ENCODE measurements at regions of chr11 and their contacts with region 1.

Region 1: DNA sequence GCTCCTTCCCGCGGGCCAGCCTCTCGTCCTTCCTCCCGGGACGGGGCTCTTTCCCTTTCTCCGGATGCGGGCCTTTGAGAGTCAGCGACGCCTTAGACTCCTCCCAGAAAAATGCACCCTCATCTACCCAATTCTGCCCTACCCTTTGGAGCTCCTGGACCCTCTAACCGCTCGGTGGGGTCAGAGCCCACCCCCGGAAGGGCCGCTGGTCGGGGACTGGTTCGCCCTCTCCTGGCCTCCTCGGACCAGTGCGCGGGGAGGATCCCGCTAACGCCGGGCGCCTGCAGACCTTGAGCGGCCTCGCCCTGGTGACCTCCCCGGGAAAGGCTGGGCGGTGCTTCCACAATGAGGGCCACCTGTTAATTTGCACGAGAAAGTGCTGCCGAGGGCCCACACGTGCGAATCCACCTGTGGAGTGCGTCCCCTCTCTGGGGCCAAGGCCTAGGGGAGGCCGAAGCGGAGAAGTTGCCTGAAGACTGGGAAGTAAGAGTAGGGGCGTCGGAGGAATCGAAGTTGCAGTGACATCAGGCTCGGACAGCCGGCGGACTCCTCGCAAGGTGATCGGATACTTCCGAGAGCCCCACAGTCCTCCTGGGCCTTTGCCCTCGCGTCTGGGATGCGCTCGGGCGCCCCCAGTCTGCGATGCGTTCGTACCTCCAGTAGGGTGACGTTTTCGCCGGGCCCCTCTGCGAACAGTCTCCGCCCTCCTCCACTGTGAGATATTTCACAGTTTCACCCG is 61.5 kb downstream of the ENDOD1 start:
- DNase-seq: peak; percentile 96
- H3K4me3 ChIP-seq: peak overlapping the region; percentile 66 to 75
- H3K27ac ChIP-seq: peak overlapping the region; percentile 90 to 97
- H3K4me1 ChIP-seq: peaks cover 31% of the 10 kb centered on the region
- H3K27me3 ChIP-seq: no peaks in the 10 kb centered on the region
- CTCF ChIP-seq: peak; percentile 69 to 98 (median 92)
- POLR2A ChIP-seq: no peak

Region 2: DNA sequence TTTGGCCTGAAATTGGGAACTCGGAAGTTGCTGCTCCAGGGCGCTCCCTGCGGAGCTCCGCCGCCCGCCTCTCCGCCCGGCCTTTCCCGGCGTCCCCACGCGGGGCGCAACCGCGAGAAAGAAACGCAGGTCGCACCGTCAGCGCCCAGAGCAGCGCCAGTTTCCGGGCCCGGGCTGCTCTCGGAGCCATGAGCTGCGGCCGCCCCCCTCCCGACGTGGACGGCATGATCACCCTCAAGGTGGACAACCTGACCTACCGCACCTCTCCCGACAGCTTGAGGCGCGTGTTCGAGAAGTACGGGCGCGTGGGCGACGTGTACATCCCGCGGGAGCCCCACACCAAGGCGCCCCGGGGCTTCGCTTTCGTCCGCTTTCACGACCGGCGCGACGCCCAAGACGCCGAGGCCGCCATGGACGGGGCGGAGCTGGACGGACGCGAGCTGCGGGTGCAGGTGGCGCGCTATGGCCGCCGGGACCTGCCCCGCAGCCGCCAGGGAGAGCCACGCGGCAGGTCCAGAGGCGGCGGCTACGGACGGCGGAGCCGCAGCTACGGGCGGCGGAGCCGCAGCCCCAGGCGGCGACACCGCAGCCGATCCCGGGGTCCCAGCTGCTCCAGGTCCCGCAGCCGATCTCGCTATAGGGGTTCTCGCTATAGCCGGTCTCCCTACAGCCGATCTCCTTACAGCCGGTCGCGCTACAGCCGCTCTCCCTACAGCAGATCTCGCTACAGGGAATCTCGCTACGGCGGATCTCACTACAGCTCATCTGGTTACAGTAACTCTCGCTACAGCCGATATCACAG is 83.9 kb before region 1 on chr11:
- intact Hi-C with region 1: loop called (anchors 5 kb)
- DNase-seq: peak; percentile 85
- H3K4me3 ChIP-seq: peak overlapping the region; percentile 80 to 84
- H3K27ac ChIP-seq: peak overlapping the region; percentile 97
- H3K4me1 ChIP-seq: peaks cover 7% of the 10 kb centered on the region
- H3K27me3 ChIP-seq: no peaks in the 10 kb centered on the region
- CTCF ChIP-seq: peak; percentile 32 to 49 (median 46)
- POLR2A ChIP-seq: no peak

Region 3: DNA sequence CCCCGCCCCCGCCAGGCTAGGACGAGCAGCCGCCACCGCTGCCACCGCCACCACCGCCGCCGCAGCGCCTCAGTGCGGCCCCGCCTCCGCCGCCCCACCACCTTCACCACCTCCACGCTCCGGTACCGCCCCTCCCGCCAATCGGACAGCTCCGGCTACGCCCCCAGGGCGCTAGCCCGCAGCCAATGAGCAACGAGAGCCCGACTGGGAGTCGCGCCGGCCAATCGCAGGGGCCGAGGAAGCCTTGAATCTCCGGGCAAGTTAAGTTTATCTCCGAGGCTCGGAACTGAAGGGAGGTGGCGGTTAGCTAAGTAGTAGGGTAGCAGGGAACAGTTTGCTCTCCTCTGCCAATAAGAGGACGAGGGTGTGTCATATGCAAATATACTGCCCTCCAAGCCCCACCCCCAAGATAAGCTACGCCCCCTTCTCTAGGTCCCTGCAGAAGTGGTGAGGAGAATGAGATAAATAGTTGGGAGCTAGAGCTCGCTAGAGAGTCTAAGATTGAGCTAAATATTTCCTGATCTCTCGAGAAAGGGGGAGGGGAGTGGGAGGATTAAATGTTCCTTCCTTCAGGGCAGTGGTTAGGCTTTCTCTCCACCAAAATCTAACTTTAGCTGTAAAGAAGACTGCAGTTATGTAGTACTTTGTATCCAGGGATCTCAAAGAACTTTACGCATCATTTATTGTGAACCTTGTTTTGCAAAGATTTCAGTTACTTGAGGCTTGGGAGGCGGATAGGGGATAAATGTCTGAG is 80.2 kb after region 1 on chr11 and contains the start of gene SESN3:
- intact Hi-C with region 1: loop called (anchors 5 kb)
- DNase-seq: peak; percentile 99
- H3K4me3 ChIP-seq: peak within 1 kb of the TSS; percentile 94 to 95
- H3K27ac ChIP-seq: peak within 1 kb of the TSS; percentile 89 to 97
- H3K4me1 ChIP-seq: no peaks in the 10 kb centered on the region
- H3K27me3 ChIP-seq: no peaks in the 10 kb centered on the region
- CTCF ChIP-seq: peak in 1 of 3 experiments; percentile 1
- POLR2A ChIP-seq: peak; percentile 62
- total RNA-seq, gene SESN3: 27.5 to 66.9 TPM

Region 4: GRCh38 chr11:95705485-95706124 is 554.5 kb after region 1 on chr11:
- intact Hi-C with region 1: loop called (anchors 10 kb)
- DNase-seq: peak; percentile 93
- H3K4me3 ChIP-seq: no peak overlapping the region
- H3K27ac ChIP-seq: peak overlapping the region; percentile 2 to 81
- H3K4me1 ChIP-seq: peaks cover 24% of the 10 kb centered on the region
- H3K27me3 ChIP-seq: no peaks in the 10 kb centered on the region
- CTCF ChIP-seq: peak; percentile 87 to 95 (median 92)
- POLR2A ChIP-seq: no peak

Region 5: GRCh38 chr11:95767498-95767897 is 616.4 kb after region 1 on chr11:
- intact Hi-C with region 1: loop called (anchors 5 kb)
- DNase-seq: no peak
- H3K4me3 ChIP-seq: no peak overlapping the region
- H3K27ac ChIP-seq: no peak overlapping the region
- H3K4me1 ChIP-seq: no peaks in the 10 kb centered on the region
- H3K27me3 ChIP-seq: no peaks in the 10 kb centered on the region
- CTCF ChIP-seq: no peak
- POLR2A ChIP-seq: no peak